Endothelial cell of umbilical vein (primary cell): ENCODE measurements at regions of chr6 and their contacts with region 1.

Region 1: DNA sequence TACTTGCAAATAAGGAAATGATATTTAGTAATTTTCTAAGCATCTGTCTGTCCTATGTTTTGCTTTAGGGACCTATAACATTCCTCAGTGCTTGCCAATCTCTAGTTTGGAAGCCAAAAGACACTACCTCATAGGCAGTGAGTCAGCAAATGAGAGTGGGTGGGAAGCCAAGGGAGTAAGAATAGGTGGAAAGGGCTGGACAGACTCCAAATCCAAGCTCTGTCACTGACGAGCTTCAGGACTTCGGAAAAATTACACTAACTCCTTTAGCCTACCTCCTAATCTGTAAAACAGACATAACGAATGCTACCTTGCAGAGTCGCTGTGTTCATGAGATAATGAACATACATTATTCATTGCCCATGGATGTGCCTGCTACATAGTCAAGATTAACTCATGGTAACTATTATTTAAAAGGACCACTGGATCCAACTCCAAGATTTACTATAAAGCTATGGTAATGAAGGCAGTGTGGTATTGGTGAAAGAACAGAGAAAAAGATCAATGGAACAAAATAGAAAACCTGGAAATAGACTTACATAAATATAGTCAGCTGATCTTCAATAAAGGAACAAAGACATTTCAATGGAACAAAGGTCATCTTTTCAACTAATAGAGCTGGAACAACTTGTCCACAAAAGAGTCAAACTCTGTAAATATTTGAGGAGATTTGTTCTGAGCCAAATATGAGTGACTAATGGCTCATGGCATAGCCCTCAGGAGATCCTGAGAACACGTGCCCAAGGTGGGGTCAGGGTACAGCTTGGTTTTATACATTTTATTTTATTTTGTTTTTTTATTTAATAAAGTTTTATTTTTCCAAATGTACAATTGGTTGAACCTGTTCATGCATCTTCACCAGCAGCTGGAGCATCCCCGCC is 64.1 kb downstream of the FAM50B start:
- DNase-seq: peak; percentile 99
- H3K4me3 ChIP-seq: peak overlapping the region in 1 of 3 experiments; percentile 10
- H3K27ac ChIP-seq: peak overlapping the region; percentile 98
- H3K4me1 ChIP-seq: peaks cover 72% of the 10 kb centered on the region
- H3K27me3 ChIP-seq: no peaks in the 10 kb centered on the region
- CTCF ChIP-seq: no peak
- POLR2A ChIP-seq: peak; percentile 52

Region 2: DNA sequence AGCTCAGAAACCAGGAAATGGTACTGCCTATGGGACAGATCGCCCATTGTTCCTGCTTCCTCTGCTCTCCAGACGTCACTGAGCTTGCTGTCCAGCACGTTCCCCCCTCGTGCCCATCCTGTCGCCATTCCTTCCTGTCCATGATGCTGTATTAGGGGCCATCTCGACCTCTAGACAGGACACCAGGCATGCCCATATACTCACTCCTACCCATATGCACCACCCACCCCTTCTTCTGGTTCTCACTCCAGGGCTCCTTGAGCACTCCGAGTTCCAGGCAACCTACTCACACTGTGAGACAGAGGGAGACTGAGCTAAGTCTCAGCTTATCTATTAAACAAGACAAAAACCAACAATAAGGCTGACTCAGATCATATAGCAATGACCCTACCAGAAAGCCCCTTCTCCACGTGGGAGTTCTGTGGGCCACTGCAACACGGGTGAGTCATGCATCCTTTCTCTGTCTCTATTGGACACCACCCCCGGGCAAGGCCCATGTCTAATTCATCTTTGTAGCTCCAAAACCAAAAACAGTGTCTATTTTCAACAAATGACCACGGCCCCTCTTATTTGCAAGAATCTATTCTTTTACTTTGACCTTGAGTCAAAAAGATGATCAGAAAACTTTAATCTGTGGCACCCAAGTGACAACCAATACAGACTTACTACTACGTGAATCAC is 588.9 kb before region 1 on chr6:
- CTCF ChIA-PET with region 1: no interaction called
- POLR2A ChIA-PET with region 1: no interaction called
- dilution Hi-C with region 1: no loop called
- intact Hi-C with region 1: loop called (anchors 2 kb)
- DNase-seq: peak; percentile 93
- H3K4me3 ChIP-seq: no peak overlapping the region
- H3K27ac ChIP-seq: peak overlapping the region; percentile 89
- H3K4me1 ChIP-seq: peaks cover 23% of the 10 kb centered on the region
- H3K27me3 ChIP-seq: no peaks in the 10 kb centered on the region
- CTCF ChIP-seq: no peak
- POLR2A ChIP-seq: no peak

Region 3: GRCh38 chr6:3797231-3798054 is 115.9 kb before region 1 on chr6:
- CTCF ChIA-PET with region 1: interaction called, 4 read pairs
- POLR2A ChIA-PET with region 1: interaction called, 3 read pairs
- dilution Hi-C with region 1: no loop called
- intact Hi-C with region 1: loop called (anchors 1 kb)
- DNase-seq: peak; percentile 83
- H3K4me3 ChIP-seq: no peak overlapping the region
- H3K27ac ChIP-seq: peak overlapping the region; percentile 100
- H3K4me1 ChIP-seq: peaks cover 39% of the 10 kb centered on the region
- H3K27me3 ChIP-seq: no peaks in the 10 kb centered on the region
- CTCF ChIP-seq: no peak
- POLR2A ChIP-seq: peak; percentile 58

Region 4: DNA sequence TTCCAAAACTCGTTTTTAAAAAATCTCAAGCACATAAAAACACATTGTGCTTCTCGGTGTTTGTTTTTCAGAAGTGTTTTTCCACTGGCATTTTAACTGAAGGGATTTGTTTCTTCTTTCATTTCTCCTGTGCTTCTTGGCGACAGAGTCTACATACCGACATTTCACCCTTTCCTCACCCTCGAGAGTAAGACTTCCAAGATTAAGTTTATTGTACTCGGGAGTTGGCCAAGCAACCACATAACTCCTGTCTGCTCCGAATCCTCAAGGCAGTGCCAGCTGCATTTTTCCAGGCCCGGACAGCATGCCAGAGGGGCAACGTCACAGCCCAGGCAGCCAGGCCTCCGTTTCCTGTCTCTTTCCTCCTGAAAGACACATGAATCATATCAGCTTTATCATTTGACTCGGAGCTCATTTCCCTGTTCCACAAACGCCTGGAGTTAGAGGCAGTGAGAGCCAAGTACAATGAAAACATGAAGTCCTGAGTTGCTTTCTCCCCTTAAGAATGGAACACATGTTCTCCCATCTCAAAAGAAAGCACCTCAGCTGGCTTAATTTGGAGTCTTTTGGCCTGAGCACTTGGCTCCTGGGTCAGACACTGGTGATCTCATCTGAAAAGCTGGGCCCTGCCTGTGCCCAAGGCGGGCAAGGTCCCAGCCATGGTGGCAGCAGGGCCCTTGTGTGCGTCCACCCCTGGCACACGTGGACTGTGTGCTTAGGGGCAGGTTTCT is 87.3 kb before region 1 on chr6:
- CTCF ChIA-PET with region 1: interaction called, 9 read pairs
- POLR2A ChIA-PET with region 1: interaction called, 20 read pairs
- dilution Hi-C with region 1: no loop called
- intact Hi-C with region 1: loop called (anchors 1 kb)
- DNase-seq: peak; percentile 100
- H3K4me3 ChIP-seq: peak overlapping the region in 1 of 3 experiments; percentile 15
- H3K27ac ChIP-seq: peak overlapping the region; percentile 96
- H3K4me1 ChIP-seq: peaks cover 43% of the 10 kb centered on the region
- H3K27me3 ChIP-seq: no peaks in the 10 kb centered on the region
- CTCF ChIP-seq: no peak
- POLR2A ChIP-seq: no peak

Region 5: DNA sequence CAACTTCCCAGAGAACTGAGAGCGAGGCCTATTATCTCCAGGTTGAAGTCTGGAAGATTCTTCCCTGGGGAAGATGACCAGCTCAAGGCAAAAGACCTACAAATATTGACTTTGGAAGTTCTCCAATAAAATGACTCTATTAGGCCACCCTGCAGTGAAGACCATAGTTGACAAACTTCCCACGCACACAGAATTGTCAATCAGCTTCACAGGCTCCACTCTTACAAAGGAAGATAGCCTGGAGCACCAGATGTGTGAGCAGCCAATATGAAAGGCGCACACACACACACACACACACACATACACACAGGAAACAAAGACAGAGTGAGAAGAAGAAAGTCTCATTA is 49.6 kb after region 1 on chr6:
- CTCF ChIA-PET with region 1: no interaction called
- POLR2A ChIA-PET with region 1: no interaction called
- dilution Hi-C with region 1: no loop called
- intact Hi-C with region 1: loop called (anchors 1 kb)
- DNase-seq: peak; percentile 35
- H3K4me3 ChIP-seq: no peak overlapping the region
- H3K27ac ChIP-seq: no peak overlapping the region
- H3K4me1 ChIP-seq: peaks cover 18% of the 10 kb centered on the region
- H3K27me3 ChIP-seq: no peaks in the 10 kb centered on the region
- CTCF ChIP-seq: no peak
- POLR2A ChIP-seq: no peak